Posterior cingulate gyrus (tissue), 11 donors: ENCODE measurements at regions of chr5 and their contacts with region 1.

Region 1: GRCh38 chr5:73673161-73673591 is 47.2 kb downstream of the ARHGEF28 start:
- DNase-seq: no peak

Region 2: DNA sequence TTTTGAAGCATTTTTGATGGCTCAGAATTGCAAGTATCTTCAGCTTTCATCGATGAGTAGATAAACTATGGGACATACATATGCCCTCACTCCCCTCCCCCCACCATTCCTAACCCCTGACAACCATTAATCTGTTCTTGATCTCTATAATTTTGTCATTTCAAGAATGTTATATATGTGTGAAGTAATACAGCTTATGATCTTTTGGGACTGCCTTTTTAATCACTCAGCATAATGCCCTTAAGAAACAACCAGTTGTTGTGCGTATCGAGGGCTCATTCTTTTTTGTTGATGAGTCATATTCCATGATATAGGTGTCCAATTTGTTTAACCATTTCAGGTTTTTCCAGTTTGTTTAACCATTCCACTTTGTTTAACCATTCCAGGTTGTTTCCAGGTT is 28.3 kb after region 1 on chr5:
- intact Hi-C with region 1: loop called (anchors 2 kb)
- DNase-seq: no peak